ENCODE measurements at regions of chr7 and their contacts with region 1.

Region 1: GRCh38 chr7:114930829-114931655 is 9.1 kb downstream of the MDFIC start:
- DNase-seq: no peak
- H3K4me3 Mint-ChIP-seq: no peak overlapping the region
- H3K27ac Mint-ChIP-seq: no peak overlapping the region
- H3K4me1 Mint-ChIP-seq: peaks cover 44% of the 10 kb centered on the region
- H3K27me3 Mint-ChIP-seq: no peaks in the 10 kb centered on the region

Region 2: GRCh38 chr7:114799628-114800028 is 131.4 kb before region 1 on chr7:
- intact Hi-C with region 1: loop called (anchors 1 kb)
- DNase-seq: no peak
- H3K4me3 Mint-ChIP-seq: peak overlapping the region; percentile 13
- H3K27ac Mint-ChIP-seq: peak overlapping the region; percentile 96
- H3K4me1 Mint-ChIP-seq: peaks cover 43% of the 10 kb centered on the region
- H3K27me3 Mint-ChIP-seq: no peaks in the 10 kb centered on the region

Region 3: GRCh38 chr7:114889646-114890285 is 41.3 kb before region 1 on chr7:
- intact Hi-C with region 1: loop called (anchors 1 kb)
- DNase-seq: peak; percentile 70
- H3K4me3 Mint-ChIP-seq: peak overlapping the region; percentile 45
- H3K27ac Mint-ChIP-seq: peak overlapping the region; percentile 88
- H3K4me1 Mint-ChIP-seq: peaks cover 45% of the 10 kb centered on the region
- H3K27me3 Mint-ChIP-seq: no peaks in the 10 kb centered on the region

Region 4: GRCh38 chr7:114944745-114945625 is 13.9 kb after region 1 on chr7:
- intact Hi-C with region 1: loop called (anchors 2 kb)
- DNase-seq: no peak
- H3K4me3 Mint-ChIP-seq: no peak overlapping the region
- H3K27ac Mint-ChIP-seq: peak overlapping the region; percentile 27
- H3K4me1 Mint-ChIP-seq: peaks cover 54% of the 10 kb centered on the region
- H3K27me3 Mint-ChIP-seq: no peaks in the 10 kb centered on the region

Region 5: DNA sequence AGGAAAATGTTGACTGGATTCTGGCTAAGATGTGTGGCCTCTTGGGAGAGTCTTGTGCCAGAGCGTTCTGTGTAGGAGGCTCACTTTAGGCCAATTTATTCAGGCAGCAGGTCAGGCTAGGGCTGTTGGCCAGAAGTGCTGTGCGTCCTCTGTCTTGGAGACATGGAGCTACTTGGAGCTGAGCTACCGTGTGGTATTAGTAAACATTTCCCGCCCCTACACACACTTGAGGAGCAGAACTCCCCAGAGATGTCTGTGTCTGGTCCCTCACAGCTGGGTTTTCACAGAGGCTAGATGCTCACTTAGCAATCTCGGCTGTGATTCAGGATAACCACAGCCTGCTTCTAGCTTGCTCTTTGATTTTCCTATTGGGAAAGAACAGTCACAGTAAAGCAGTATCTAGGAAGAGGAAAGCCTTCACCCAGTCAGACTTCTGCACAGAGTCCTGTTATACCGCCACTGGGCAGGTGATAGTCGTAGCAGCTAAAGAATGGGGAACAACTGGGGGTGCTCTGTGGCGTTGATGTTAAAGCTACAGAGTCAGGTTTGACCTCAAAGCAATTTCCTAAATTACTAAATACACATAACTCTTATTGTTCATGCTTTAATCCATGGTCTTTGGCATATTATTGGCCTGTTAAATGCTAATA is 77.5 kb after region 1 on chr7:
- intact Hi-C with region 1: loop called (anchors 1 kb)
- DNase-seq: peak; percentile 72
- H3K4me3 Mint-ChIP-seq: peak overlapping the region; percentile 73
- H3K27ac Mint-ChIP-seq: peak overlapping the region; percentile 86
- H3K4me1 Mint-ChIP-seq: peaks cover 73% of the 10 kb centered on the region
- H3K27me3 Mint-ChIP-seq: no peaks in the 10 kb centered on the region

Measured in activated CD4-positive, alpha-beta T cell treated with anti-CD3 and anti-CD28 coated beads, Interleukin-2, amount 10 ng/mL, durations not matched to agents 24 days and 14 days (primary cell).